ENCODE measurements at regions of chr5 and their contacts with region 1.

Region 1: GRCh38 chr5:74648835-74649293 is 8.3 kb upstream of the ENC1 start:
- DNase-seq: no peak
- ATAC-seq: peak; percentile 93
- H3K4me3 ChIP-seq: no peak overlapping the region
- H3K27ac ChIP-seq: no peak overlapping the region
- H3K4me1 ChIP-seq: peaks cover 12 to 14% of the 10 kb centered on the region in 2 experiments; a peak in 3 of 4 replicates
- H3K27me3 ChIP-seq: no peaks in the 10 kb centered on the region
- CTCF ChIP-seq: peak; percentile 52 to 83 (median 83)
- POLR2A ChIP-seq: no peak
- RAD21 ChIP-seq: peak; percentile 95

Region 2: DNA sequence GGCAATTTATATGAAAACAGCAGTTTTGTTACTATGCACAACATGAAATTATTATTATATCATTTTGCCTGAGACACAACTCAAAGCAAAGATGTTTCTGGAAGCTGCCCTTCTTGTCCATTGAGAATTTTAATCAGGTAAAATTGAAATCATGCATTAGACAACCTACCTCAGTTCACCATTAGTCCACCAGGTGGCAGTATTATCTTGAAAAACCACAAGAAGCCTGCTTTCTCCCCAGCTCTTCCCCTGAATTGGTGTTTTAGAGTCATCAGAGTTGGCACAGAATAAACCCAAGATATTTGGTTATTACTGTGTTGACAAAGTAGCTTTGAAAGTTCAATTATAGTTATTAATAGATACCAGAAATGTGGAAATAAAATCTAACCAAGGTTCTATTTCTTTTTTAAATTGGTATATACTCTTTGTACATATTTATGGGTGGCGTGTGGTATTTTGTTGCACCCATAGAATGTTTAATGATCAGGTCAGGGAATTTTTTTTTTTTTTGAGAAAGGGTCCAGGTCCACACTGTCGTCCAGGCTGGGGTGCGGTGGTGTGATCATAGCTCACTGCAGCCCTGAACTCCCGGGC is 1057.7 kb before region 1 on chr5:
- CTCF ChIA-PET with region 1: interaction called, 11 read pairs
- POLR2A ChIA-PET with region 1: no interaction called
- RAD21 ChIA-PET with region 1: no interaction called
- intact Hi-C with region 1: loop called (anchors 2 kb)
- DNase-seq: peak; percentile 83
- ATAC-seq: peak; percentile 84
- H3K4me3 ChIP-seq: no peak overlapping the region
- H3K27ac ChIP-seq: no peak overlapping the region
- H3K4me1 ChIP-seq: no peaks in the 10 kb centered on the region
- H3K27me3 ChIP-seq: no peaks in the 10 kb centered on the region
- CTCF ChIP-seq: peak; percentile 59 to 85 (median 80); a peak in 5 of 6 replicates
- POLR2A ChIP-seq: no peak
- RAD21 ChIP-seq: peak; percentile 92

Region 3: DNA sequence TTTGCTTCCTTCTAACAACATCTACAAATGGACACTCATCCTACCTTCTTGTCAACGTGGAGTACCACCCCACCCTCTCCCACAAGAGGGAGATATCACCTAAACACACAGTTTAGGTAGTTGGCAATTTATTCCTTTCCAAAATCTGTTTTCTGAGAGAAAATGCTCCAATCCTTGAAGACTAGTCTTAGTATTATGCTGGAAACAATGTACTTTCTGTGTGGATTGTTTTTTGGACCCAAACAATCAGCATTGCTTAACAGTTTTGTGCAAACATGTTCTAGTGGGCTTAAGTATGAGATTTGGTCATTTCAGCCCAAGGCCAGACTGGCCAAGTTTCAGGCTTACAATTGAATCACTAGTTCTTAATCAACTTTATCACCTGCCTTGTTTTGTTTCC is 663.7 kb before region 1 on chr5:
- CTCF ChIA-PET with region 1: interaction called, 5 read pairs
- POLR2A ChIA-PET with region 1: no interaction called
- RAD21 ChIA-PET with region 1: interaction called in 1 of 2 experiments, 3 read pairs
- intact Hi-C with region 1: loop called (anchors 2 kb)
- DNase-seq: peak; percentile 7
- ATAC-seq: peak; percentile 76
- H3K4me3 ChIP-seq: no peak overlapping the region
- H3K27ac ChIP-seq: no peak overlapping the region
- H3K4me1 ChIP-seq: no peaks in the 10 kb centered on the region
- H3K27me3 ChIP-seq: no peaks in the 10 kb centered on the region
- CTCF ChIP-seq: peak; percentile 34 to 58 (median 46); a peak in 5 of 6 replicates
- POLR2A ChIP-seq: no peak
- RAD21 ChIP-seq: peak; percentile 67

Region 4: DNA sequence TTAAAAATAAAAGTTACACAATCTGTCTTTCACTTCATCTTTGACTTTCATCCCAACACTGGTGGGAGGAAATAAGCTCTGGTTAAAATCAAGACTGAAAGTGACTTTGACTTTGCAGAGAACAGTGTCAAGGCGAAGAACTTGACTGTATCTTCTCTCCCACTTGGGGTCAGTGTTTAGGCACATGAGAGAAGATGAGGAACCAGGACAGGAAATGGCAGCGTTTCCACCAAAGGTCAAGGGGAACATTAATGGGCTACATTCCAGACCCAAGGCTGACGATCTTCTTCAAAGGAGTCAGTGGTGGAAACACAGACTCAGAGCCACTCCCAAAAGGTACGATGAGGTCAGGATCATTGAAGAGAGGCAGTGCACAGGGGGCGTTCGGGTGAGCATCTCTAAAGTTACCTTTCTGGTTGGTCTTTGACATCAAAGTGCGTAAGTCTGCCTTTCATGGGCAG is 613.3 kb before region 1 on chr5:
- CTCF ChIA-PET with region 1: no interaction called
- POLR2A ChIA-PET with region 1: no interaction called
- RAD21 ChIA-PET with region 1: interaction called in 1 of 2 experiments, 3 read pairs
- intact Hi-C with region 1: loop called (anchors 2 kb)
- DNase-seq: peak; percentile 36
- ATAC-seq: peak; percentile 84
- H3K4me3 ChIP-seq: no peak overlapping the region
- H3K27ac ChIP-seq: no peak overlapping the region
- H3K4me1 ChIP-seq: peaks cover 23% of the 10 kb centered on the region in 2 experiments
- H3K27me3 ChIP-seq: 0 out of 2 replicates have a peak, but pooled peaks cover 3% of the 10 kb centered on the region
- CTCF ChIP-seq: peak; percentile 46 to 53 (median 51); a peak in 5 of 6 replicates
- POLR2A ChIP-seq: no peak
- RAD21 ChIP-seq: peak; percentile 79

Region 5: DNA sequence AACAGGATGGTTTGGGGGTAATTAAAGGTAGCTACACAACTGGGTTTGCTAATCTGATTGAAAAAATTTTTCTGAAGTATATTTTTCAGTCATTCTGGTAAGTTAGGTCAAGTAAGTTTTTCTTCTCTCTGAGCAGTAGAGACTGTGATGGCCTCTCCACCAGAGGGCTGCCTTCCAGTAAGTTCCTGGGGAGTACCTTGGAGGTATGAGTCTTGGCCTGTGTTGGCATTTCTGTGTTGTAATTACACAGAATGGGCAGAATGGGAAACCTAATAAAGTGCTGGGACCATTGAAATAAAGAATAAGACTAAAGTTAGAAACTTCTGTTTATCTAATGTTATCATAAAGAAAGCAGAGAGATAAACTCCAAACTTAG is 592.1 kb before region 1 on chr5:
- CTCF ChIA-PET with region 1: no interaction called
- POLR2A ChIA-PET with region 1: no interaction called
- RAD21 ChIA-PET with region 1: no interaction called
- intact Hi-C with region 1: loop called (anchors 5 kb)
- DNase-seq: no peak
- ATAC-seq: peak; percentile 90
- H3K4me3 ChIP-seq: no peak overlapping the region
- H3K27ac ChIP-seq: no peak overlapping the region
- H3K4me1 ChIP-seq: no peaks in the 10 kb centered on the region
- H3K27me3 ChIP-seq: no peaks in the 10 kb centered on the region
- CTCF ChIP-seq: peak; percentile 31 to 60 (median 46); a peak in 5 of 6 replicates
- POLR2A ChIP-seq: no peak
- RAD21 ChIP-seq: peak; percentile 64

Measured in HCT116 (cell line).